ENCODE measurements at regions of chr4 and their contacts with region 1.

Region 1: DNA sequence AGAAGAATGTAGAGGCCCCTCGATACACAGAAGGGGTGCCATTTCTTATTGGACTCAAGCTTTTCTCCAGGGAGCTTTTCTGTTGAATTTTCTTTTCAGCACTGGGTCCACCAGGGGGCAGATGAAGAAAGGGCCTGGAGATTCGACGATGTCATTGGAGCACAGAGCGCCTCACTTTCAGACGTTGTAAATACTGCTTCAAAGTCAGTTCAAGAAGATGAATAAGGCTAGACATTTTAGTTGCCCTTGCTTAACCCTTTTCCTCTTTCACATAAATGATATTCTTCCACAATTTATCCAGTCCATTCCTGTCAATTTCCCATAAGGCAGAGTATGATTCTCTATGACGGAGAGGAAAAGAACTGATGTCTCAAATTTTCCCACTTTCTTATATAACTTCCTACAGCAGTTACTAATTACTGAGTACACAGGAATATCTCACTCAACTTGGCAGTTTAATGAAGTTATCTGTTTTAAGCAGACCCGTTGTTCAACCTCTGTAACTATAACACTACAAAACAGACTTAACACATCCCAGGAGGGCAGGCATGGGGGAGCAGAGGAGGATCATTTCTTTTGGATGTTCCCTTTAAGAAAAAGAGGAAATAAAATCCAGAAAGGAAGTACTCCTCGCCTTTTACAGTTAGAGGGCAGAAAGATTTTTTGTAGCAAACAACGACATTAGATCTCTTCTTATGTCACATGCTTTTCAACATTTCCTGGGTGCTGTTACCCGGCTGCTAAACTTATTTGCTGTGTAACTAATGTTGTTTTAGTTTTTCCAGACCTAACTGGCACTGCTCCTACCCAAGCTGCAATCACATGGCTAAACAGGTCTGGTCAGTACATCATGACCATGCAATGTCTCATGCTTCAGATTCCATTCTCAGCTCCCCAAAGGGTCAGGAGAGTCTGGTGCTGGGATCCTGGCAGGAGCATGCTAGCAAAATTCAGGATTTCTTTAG is 12.2 kb upstream of the CENPU start:
- DNase-seq: peak; percentile 91
- H3K4me3 Mint-ChIP-seq: no peak overlapping the region
- H3K27ac Mint-ChIP-seq: no peak overlapping the region
- H3K4me1 Mint-ChIP-seq: peaks cover 15% of the 10 kb centered on the region
- H3K27me3 Mint-ChIP-seq: no peaks in the 10 kb centered on the region

Region 2: GRCh38 chr4:184472614-184473498 is 273.3 kb before region 1 on chr4:
- CTCF ChIA-PET with region 1: no interaction called
- intact Hi-C with region 1: no loop called
- DNase-seq: peak; percentile 68
- H3K4me3 Mint-ChIP-seq: peak overlapping the region; percentile 83
- H3K27ac Mint-ChIP-seq: peak overlapping the region; percentile 95
- H3K4me1 Mint-ChIP-seq: peaks cover 43% of the 10 kb centered on the region
- H3K27me3 Mint-ChIP-seq: no peaks in the 10 kb centered on the region

Region 3: DNA sequence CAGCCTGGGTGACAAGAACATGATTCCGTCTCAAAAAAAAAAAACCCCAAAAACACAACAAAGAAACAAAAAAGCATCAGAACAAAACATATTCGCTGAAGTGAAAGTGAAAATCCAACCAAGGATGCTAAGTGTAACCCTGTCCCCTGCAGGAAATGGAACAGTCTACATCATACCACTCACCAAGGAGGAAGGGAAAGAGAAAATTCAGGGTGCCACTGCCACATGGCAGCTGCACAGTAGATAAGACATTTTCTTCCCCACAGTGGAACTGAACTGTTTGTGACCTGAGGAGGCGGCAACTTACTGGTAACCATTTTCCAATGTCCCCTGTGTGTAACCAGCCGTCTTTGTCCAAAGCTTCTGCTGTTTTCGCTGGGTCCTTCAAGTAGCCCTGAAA is 16.0 kb after region 1 on chr4:
- CTCF ChIA-PET with region 1: interaction called, 6 read pairs
- intact Hi-C with region 1: loop called (anchors 1 kb)
- DNase-seq: peak; percentile 56
- H3K4me3 Mint-ChIP-seq: peak overlapping the region; percentile 24
- H3K27ac Mint-ChIP-seq: peak overlapping the region; percentile 83
- H3K4me1 Mint-ChIP-seq: peaks cover 22% of the 10 kb centered on the region
- H3K27me3 Mint-ChIP-seq: no peaks in the 10 kb centered on the region

Region 4: DNA sequence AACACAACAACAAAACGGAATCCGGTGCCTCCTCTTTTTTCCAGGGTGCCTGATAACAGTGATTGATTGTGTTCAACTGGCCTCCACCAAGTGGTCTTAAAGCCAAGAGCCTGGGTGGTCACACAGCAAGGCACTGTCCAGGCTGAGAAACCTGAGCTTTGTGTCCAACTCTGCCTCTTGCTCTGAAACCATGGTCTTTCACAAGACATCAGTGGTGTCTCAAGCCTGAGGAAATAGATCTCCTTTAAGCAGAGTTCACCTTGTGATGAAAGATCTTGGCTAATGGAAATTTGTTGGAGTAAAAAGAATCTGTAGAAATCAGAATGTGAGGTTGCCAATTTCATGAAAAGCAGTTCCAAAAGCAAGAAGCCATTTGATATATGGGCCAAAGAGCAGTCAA is 126.9 kb after region 1 on chr4:
- CTCF ChIA-PET with region 1: no interaction called
- intact Hi-C with region 1: no loop called
- DNase-seq: no peak
- H3K4me3 Mint-ChIP-seq: no peak overlapping the region
- H3K27ac Mint-ChIP-seq: no peak overlapping the region
- H3K4me1 Mint-ChIP-seq: no peaks in the 10 kb centered on the region
- H3K27me3 Mint-ChIP-seq: no peaks in the 10 kb centered on the region

Region 5: DNA sequence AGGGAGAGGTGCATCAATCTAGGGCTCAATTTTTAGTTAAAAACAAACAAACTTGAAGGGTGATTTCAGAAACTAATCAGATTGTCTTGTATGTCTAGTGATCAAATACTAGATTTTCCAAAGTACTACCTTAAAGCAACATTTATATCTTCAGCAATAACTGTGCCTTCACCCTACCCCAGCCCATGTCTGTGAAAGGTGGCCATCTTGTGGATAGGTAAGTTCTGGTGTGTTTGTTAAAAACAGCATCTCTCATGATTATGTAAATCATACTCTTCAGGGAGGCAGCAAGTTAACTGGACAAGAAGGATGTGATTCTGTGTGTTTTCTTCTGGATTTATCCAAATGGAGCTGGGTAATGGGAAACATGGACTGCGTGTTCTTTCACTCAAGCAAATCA is 161.1 kb after region 1 on chr4:
- CTCF ChIA-PET with region 1: interaction called, 10 read pairs
- intact Hi-C with region 1: loop called (anchors 1 kb)
- DNase-seq: peak; percentile 48
- H3K4me3 Mint-ChIP-seq: no peak overlapping the region
- H3K27ac Mint-ChIP-seq: peak overlapping the region; percentile 14
- H3K4me1 Mint-ChIP-seq: peaks cover 7% of the 10 kb centered on the region
- H3K27me3 Mint-ChIP-seq: no peaks in the 10 kb centered on the region

Region 6: GRCh38 chr4:184942444-184943425 is 196.6 kb after region 1 on chr4:
- CTCF ChIA-PET with region 1: no interaction called
- intact Hi-C with region 1: no loop called
- DNase-seq: no peak
- H3K4me3 Mint-ChIP-seq: no peak overlapping the region
- H3K27ac Mint-ChIP-seq: no peak overlapping the region
- H3K4me1 Mint-ChIP-seq: no peaks in the 10 kb centered on the region
- H3K27me3 Mint-ChIP-seq: no peaks in the 10 kb centered on the region

Region 7: DNA sequence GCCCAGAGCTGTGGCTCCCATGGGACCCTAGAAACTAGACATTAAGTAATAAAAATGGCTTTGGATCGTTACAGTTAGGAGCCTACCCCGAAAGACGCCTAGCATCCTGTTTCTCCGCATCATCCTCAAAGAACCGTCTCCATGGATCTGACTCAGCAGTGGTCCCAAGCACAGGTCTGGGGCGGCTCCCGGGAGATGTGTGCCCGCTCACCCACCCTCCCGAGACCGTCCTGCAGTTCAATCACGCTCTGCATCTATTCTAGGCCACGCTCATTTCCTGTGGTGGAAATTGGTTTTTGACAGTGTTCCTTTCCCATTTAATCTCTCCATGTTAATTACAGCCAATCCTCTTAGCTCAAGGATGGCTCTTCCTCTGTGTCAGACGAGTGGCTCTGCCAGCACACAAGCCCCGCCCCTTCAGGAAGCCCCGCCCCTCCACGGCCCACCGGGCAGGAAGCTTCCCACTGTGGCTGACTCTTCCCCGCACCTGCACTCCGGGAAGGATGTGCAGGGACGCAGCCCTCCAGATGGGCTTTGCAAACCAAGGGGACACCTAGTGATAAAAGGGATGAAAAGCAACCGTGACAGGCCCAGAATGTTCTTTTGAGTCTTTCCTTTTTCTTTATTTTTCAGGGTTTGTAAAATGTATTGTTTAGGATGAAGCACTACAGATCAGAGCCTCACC is 237.7 kb after region 1 on chr4:
- CTCF ChIA-PET with region 1: interaction called, 5 read pairs
- intact Hi-C with region 1: loop called (anchors 1 kb)
- DNase-seq: peak; percentile 83
- H3K4me3 Mint-ChIP-seq: no peak overlapping the region
- H3K27ac Mint-ChIP-seq: no peak overlapping the region
- H3K4me1 Mint-ChIP-seq: no peaks in the 10 kb centered on the region
- H3K27me3 Mint-ChIP-seq: no peaks in the 10 kb centered on the region

Region 8: DNA sequence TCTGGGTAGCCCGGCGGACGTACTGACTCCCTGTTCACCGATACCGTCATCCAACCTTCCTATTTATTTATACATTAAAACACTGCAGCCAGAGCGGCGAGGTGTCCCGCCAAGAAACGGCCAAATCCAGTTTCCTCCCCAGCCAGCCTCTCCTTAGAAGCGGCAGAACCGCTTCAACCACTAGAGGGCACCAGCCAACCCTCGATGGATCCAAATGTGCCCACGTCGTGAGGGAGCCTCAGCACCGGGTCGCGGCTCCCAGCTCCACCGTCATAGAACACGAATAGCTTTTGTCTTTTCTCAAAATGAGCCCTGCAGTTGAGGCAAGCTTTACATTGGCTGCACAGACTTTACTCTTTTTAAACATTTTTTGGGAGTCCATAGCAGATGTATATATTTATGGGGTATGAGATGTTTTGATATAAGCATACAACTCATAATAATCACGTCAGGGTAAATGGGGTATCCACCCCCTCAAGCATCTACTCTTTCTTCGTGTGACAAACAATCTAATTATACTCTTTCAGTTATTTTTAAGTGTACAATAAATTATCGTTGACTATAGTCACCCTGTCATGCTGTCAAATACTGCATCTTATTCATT is 259.2 kb after region 1 on chr4:
- CTCF ChIA-PET with region 1: interaction called, 15 read pairs
- intact Hi-C with region 1: loop called (anchors 1 kb)
- DNase-seq: peak; percentile 92
- H3K4me3 Mint-ChIP-seq: peak overlapping the region; percentile 17
- H3K27ac Mint-ChIP-seq: no peak overlapping the region
- H3K4me1 Mint-ChIP-seq: peaks cover 6% of the 10 kb centered on the region
- H3K27me3 Mint-ChIP-seq: peaks cover 28% of the 10 kb centered on the region

Region 9: GRCh38 chr4:185096032-185096653 is 350.0 kb after region 1 on chr4:
- CTCF ChIA-PET with region 1: no interaction called
- intact Hi-C with region 1: loop called (anchors 1 kb)
- DNase-seq: peak; percentile 57
- H3K4me3 Mint-ChIP-seq: no peak overlapping the region
- H3K27ac Mint-ChIP-seq: no peak overlapping the region
- H3K4me1 Mint-ChIP-seq: no peaks in the 10 kb centered on the region
- H3K27me3 Mint-ChIP-seq: peaks cover 8% of the 10 kb centered on the region

Region 10: DNA sequence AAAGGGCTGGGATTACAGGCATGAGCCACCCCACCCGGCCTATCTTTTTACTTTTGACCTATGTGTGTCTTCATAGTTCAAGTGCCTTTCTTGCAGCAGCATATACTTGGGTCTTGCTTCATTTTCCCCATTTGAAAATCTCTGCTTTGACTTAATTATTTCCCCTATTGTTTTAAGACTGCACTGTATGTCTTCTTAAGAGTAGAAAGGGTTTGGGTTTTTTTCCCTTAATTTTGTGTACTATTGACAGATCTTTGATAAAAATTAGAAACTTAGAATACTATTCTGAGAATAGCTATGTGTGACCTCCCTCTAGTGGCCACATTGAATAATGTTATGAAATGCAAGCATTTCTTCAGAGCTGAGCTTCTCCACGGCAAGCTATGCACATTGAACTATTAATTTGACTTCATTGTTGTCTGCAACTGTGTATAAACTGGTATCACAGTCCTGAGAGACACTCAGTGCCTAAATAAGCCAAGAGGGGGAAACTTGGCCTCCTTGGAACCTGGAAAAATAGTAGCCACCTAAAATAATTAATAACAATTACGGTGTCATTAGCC is 388.3 kb after region 1 on chr4:
- CTCF ChIA-PET with region 1: interaction called, 3 read pairs
- intact Hi-C with region 1: loop called (anchors 2 kb)
- DNase-seq: no peak
- H3K4me3 Mint-ChIP-seq: no peak overlapping the region
- H3K27ac Mint-ChIP-seq: no peak overlapping the region
- H3K4me1 Mint-ChIP-seq: no peaks in the 10 kb centered on the region
- H3K27me3 Mint-ChIP-seq: peaks cover 21% of the 10 kb centered on the region